Gastrocnemius medialis (tissue), 4 donors: ENCODE measurements at regions of chr5 and their contacts with region 1.

Region 1: GRCh38 chr5:81301271-81302015 is at the start of gene ZCCHC9:
- DNase-seq: peak; percentile 89
- ATAC-seq: peak; percentile 97 to 98
- H3K4me3 ChIP-seq: peak within 1 kb of the TSS; percentile 83 to 96 (median 87)
- H3K27ac ChIP-seq: peak within 1 kb of the TSS; percentile 87 to 93 (median 88)
- H3K4me1 ChIP-seq: peaks cover 28 to 30% of the 10 kb centered on the region in 2 donors
- H3K27me3 ChIP-seq: no peaks in the 10 kb centered on the region
- CTCF ChIP-seq: peak in 3 of 5 experiments; percentile 13 to 37 (median 31)
- POLR2A ChIP-seq: peak; percentile 58 to 65
- total RNA-seq, gene ZCCHC9: 8.0 to 15.7 (median 12.3) TPM

Region 2: GRCh38 chr5:81233080-81233634 is 68.3 kb before region 1 on chr5 and contains the start of gene CKMT2:
- in situ Hi-C with region 1: no loop called
- intact Hi-C with region 1: loop called (anchors 2 kb)
- DNase-seq: peak; percentile 90 to 97
- ATAC-seq: peak; percentile 47 to 59
- H3K4me3 ChIP-seq: peak within 1 kb of the TSS; percentile 61 to 75 (median 68)
- H3K27ac ChIP-seq: peak within 1 kb of the TSS; percentile 98 to 100 (median 98)
- H3K4me1 ChIP-seq: peaks cover 47 to 49% of the 10 kb centered on the region in 2 donors
- H3K27me3 ChIP-seq: no peaks in the 10 kb centered on the region
- CTCF ChIP-seq: no peak
- POLR2A ChIP-seq: peak; percentile 88 to 91
- total RNA-seq, gene CKMT2: 550 to 1,114 (median 879) TPM

Region 3: DNA sequence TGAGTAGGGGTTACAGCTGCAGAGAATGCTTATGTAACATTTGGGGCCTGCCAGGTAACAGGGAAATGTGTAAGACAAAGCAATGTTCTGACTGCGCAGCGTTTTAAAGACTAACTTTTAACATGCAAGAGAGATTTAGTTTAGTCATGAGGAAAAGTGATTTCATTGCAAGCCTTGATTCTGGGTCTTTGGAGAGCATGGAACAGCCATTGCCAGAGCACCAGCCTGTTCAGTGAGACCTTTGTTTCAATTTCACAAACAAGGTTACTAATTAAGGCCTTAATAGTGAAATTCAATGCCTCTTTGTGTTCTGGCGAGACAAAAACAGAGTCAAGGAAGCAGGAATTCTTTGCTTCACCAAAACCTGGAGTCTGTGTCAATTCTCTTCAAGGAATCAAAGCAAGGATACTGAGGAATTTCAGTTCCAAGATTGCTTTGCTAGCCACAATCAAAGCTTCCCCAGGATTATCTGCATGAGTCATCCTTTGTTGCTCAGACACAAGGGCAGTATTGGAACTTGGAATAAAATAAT is 53.9 kb before region 1 on chr5:
- in situ Hi-C with region 1: no loop called
- intact Hi-C with region 1: loop called (anchors 5 kb)
- DNase-seq: no peak
- ATAC-seq: no peak
- H3K4me3 ChIP-seq: no peak overlapping the region
- H3K27ac ChIP-seq: peak overlapping the region; percentile 98 to 100 (median 98)
- H3K4me1 ChIP-seq: peaks cover 92 to 95% of the 10 kb centered on the region in 2 donors
- H3K27me3 ChIP-seq: no peaks in the 10 kb centered on the region
- CTCF ChIP-seq: no peak
- POLR2A ChIP-seq: no peak

Region 4: GRCh38 chr5:81420039-81420667 is 118.7 kb after region 1 on chr5:
- in situ Hi-C with region 1: no loop called
- intact Hi-C with region 1: loop called (anchors 5 kb)
- DNase-seq: no peak
- ATAC-seq: no peak
- H3K4me3 ChIP-seq: no peak overlapping the region
- H3K27ac ChIP-seq: no peak overlapping the region
- H3K4me1 ChIP-seq: peaks cover 8 to 25% of the 10 kb centered on the region in 2 donors
- H3K27me3 ChIP-seq: no peaks in the 10 kb centered on the region
- CTCF ChIP-seq: no peak
- POLR2A ChIP-seq: no peak